Left ventricle myocardium inferior (tissue), 1 donor: ENCODE measurements at regions of chr1 and their contacts with region 1.

Region 1: DNA sequence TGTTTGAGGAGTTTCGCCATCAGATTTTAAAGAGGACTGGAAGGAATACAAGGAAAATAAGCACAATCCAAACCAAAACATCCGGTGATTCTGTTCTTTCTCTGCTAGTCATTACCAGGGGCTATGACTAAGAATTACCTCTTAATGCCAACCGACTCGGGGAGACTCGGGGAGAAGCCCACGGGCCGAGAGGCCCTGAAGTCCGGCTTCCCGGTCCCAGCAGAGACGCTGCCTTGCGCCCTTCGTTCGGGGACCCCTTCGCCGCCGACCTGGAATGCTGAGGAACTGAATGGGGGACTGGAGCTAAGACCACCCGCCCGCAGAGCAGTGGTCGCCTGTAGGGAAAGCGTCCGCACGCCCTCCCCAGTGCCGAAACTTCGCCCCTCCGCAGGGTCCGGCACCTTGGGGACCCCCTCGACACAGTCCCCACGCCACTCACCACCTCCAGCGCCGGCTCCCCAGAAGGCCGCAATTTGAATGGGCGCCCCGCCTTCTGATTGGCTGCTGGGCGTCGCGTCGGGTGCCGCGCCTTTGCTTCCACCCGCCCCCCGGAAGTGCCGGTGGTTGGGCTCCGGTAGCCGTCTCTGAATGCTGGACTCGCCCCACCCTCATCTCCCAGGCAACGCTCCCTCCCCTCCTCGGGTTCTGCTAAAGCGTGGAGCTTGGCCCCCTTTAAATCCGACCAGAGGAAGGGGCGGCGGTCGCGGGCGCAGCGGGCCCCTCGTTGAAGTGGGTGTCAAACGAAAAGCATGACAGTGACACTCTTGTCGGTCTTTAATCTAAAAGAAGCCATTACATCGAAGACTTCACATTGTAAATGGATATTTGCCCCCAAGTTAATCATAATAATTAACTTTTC is at the start of gene KIF14:
- DNase-seq: peak; percentile 93
- H3K4me3 ChIP-seq: peak within 1 kb of the TSS; percentile 71
- H3K27ac ChIP-seq: peak within 1 kb of the TSS; percentile 29
- H3K4me1 ChIP-seq: peaks cover 22% of the 10 kb centered on the region
- H3K27me3 ChIP-seq: no peaks in the 10 kb centered on the region
- CTCF ChIP-seq: no peak
- total RNA-seq, gene KIF14: 0.08 TPM

Region 2: GRCh38 chr1:200802865-200803512 is 182.5 kb after region 1 on chr1:
- intact Hi-C with region 1: loop called (anchors 5 kb)
- DNase-seq: peak; percentile 62
- H3K4me3 ChIP-seq: no peak overlapping the region
- H3K27ac ChIP-seq: no peak overlapping the region
- H3K4me1 ChIP-seq: peaks cover 4% of the 10 kb centered on the region
- H3K27me3 ChIP-seq: no peaks in the 10 kb centered on the region
- CTCF ChIP-seq: peak; percentile 95

Region 3: GRCh38 chr1:200837931-200838571 is 217.5 kb after region 1 on chr1:
- intact Hi-C with region 1: loop called (anchors 10 kb)
- DNase-seq: no peak
- H3K4me3 ChIP-seq: no peak overlapping the region
- H3K27ac ChIP-seq: no peak overlapping the region
- H3K4me1 ChIP-seq: no peaks in the 10 kb centered on the region
- H3K27me3 ChIP-seq: no peaks in the 10 kb centered on the region
- CTCF ChIP-seq: peak; percentile 65